A673 (cell line): ENCODE measurements at regions of chr16 and their contacts with region 1.

Region 1: DNA sequence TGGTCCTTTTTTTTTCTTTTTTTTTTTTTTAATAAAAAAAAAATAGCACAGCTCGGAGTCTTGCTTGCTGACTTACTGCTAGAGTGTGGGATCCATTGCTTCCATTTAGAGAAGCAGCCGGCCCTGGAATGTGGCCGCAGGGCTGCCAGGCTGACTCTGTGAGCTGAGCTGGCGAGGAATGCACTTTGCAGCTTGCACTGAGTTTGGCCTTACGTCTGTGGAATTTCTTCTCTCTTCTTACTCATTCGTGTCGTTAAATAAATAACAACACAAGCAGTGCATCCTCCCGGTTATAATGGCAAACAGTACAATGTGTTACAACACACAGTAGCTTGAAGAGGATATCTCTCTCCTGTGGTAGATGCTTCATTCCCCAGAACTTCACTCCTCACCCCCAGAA is 69.2 kb downstream of the PRKCB start:
- DNase-seq: peak; percentile 69
- H3K4me3 ChIP-seq: peak overlapping the region; percentile 3
- H3K27ac ChIP-seq: peak overlapping the region; percentile 97
- H3K4me1 ChIP-seq: peaks cover 92% of the 10 kb centered on the region
- H3K27me3 ChIP-seq: no peaks in the 10 kb centered on the region
- CTCF ChIP-seq: no peak

Region 2: GRCh38 chr16:23578101-23578830 is 326.8 kb before region 1 on chr16:
- CTCF ChIA-PET with region 1: no interaction called
- POLR2A ChIA-PET with region 1: no interaction called
- intact Hi-C with region 1: no loop called
- DNase-seq: no peak
- H3K4me3 ChIP-seq: no peak overlapping the region
- H3K27ac ChIP-seq: peak overlapping the region; percentile 48
- H3K4me1 ChIP-seq: no peaks in the 10 kb centered on the region
- H3K27me3 ChIP-seq: no peaks in the 10 kb centered on the region
- CTCF ChIP-seq: no peak

Region 3: GRCh38 chr16:23739516-23739915 is 165.5 kb before region 1 on chr16:
- CTCF ChIA-PET with region 1: no interaction called
- POLR2A ChIA-PET with region 1: no interaction called
- intact Hi-C with region 1: loop called (anchors 5 kb)
- DNase-seq: no peak
- H3K4me3 ChIP-seq: no peak overlapping the region
- H3K27ac ChIP-seq: no peak overlapping the region
- H3K4me1 ChIP-seq: peaks cover 9% of the 10 kb centered on the region
- H3K27me3 ChIP-seq: no peaks in the 10 kb centered on the region
- CTCF ChIP-seq: no peak

Region 4: GRCh38 chr16:23835390-23836077 is 69.5 kb before region 1 on chr16 and contains the start of gene PRKCB:
- CTCF ChIA-PET with region 1: no interaction called
- POLR2A ChIA-PET with region 1: no interaction called
- intact Hi-C with region 1: loop called (anchors 1 kb)
- DNase-seq: peak; percentile 92
- H3K4me3 ChIP-seq: peak within 1 kb of the TSS; percentile 87
- H3K27ac ChIP-seq: peak within 1 kb of the TSS; percentile 68
- H3K4me1 ChIP-seq: peaks cover 28% of the 10 kb centered on the region
- H3K27me3 ChIP-seq: no peaks in the 10 kb centered on the region
- CTCF ChIP-seq: no peak
- total RNA-seq, gene PRKCB: 158 and 171 TPM in 2 replicates

Region 5: GRCh38 chr16:23952128-23952970 is 47.3 kb after region 1 on chr16:
- CTCF ChIA-PET with region 1: interaction called, 3 read pairs
- POLR2A ChIA-PET with region 1: no interaction called
- intact Hi-C with region 1: loop called (anchors 5 kb)
- DNase-seq: peak; percentile 92
- H3K4me3 ChIP-seq: peak overlapping the region; percentile 19
- H3K27ac ChIP-seq: peak overlapping the region; percentile 94
- H3K4me1 ChIP-seq: peaks cover 61% of the 10 kb centered on the region
- H3K27me3 ChIP-seq: no peaks in the 10 kb centered on the region
- CTCF ChIP-seq: no peak

Region 6: GRCh38 chr16:24010440-24011089 is 105.5 kb after region 1 on chr16:
- CTCF ChIA-PET with region 1: interaction called, 10 read pairs
- POLR2A ChIA-PET with region 1: no interaction called
- intact Hi-C with region 1: loop called (anchors 5 kb)
- DNase-seq: peak; percentile 90
- H3K4me3 ChIP-seq: no peak overlapping the region
- H3K27ac ChIP-seq: peak overlapping the region; percentile 50
- H3K4me1 ChIP-seq: peaks cover 59% of the 10 kb centered on the region
- H3K27me3 ChIP-seq: no peaks in the 10 kb centered on the region
- CTCF ChIP-seq: peak; percentile 90

Region 7: DNA sequence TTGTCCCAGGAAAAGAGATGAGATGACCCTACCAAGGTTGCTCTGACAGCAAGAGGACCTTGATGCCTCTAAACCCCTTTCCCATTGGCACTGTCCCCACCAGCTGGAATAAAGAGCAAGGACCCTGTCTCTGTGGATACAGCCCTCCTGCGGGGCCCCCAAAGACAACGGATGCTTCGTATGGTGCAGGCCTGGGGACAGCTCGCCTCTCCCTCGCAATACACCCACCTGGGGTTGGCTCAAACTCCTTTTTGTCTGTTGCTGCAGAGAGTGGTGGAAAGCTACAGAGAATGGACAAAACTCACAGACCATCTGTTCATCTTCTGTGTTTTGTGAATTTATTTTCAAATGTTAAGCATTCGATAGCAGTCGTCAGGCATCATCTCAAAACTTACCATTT is 323.5 kb after region 1 on chr16:
- CTCF ChIA-PET with region 1: no interaction called
- POLR2A ChIA-PET with region 1: no interaction called
- intact Hi-C with region 1: no loop called
- DNase-seq: no peak
- H3K4me3 ChIP-seq: no peak overlapping the region
- H3K27ac ChIP-seq: no peak overlapping the region
- H3K4me1 ChIP-seq: no peaks in the 10 kb centered on the region
- H3K27me3 ChIP-seq: no peaks in the 10 kb centered on the region
- CTCF ChIP-seq: no peak

Region 8: GRCh38 chr16:24309222-24309905 is 404.3 kb after region 1 on chr16:
- CTCF ChIA-PET with region 1: interaction called, 3 read pairs
- POLR2A ChIA-PET with region 1: interaction called, 4 read pairs
- intact Hi-C with region 1: loop called (anchors 2 kb)
- DNase-seq: peak; percentile 97
- H3K4me3 ChIP-seq: no peak overlapping the region
- H3K27ac ChIP-seq: peak overlapping the region; percentile 98
- H3K4me1 ChIP-seq: peaks cover 41% of the 10 kb centered on the region
- H3K27me3 ChIP-seq: no peaks in the 10 kb centered on the region
- CTCF ChIP-seq: no peak